ENCODE measurements at regions of chr3 and their contacts with region 1.

Region 1: DNA sequence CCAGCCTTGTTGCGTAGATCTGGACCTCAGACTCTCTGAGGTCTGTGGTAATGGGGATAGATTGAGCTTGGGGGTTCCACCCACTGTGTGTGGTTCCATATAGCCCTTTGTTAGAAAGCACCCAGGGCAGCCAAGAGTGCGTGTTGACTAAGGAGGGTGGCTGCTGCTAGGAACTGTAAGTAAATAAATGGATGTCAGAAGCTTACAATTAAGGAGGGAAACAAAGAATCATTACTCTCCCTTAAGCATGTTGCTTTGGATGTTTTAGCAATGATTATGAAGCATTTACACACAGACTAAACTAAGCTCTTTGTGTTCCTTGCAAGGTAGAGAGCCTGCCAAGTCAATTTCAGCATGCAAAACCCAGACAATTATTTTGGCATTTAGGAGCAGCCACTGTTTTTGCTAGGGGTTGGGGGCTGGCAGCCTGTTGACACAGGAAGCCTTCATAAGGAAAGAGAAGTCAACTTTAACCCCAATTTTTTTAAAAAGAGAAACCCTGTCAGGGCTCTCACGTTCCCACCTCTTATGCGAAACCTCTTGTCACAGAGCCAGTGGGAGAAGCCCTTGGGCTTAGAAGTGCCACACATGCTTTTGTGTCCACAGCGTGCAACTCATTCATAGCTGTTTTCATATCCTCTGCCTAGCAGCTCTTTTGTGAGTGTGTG is 127.8 kb downstream of the CMSS1 start:
- DNase-seq: no peak
- H3K4me3 ChIP-seq: no peak overlapping the region
- H3K27ac ChIP-seq: no peak overlapping the region
- H3K4me1 ChIP-seq: peaks cover 23% of the 10 kb centered on the region
- H3K27me3 ChIP-seq: no peaks in the 10 kb centered on the region
- CTCF ChIP-seq: no peak
- POLR2A ChIP-seq: no peak

Region 2: GRCh38 chr3:99286266-99286845 is 659.1 kb before region 1 on chr3:
- intact Hi-C with region 1: no loop called
- DNase-seq: no peak
- H3K4me3 ChIP-seq: no peak overlapping the region
- H3K27ac ChIP-seq: no peak overlapping the region
- H3K4me1 ChIP-seq: no peaks in the 10 kb centered on the region
- H3K27me3 ChIP-seq: no peaks in the 10 kb centered on the region
- CTCF ChIP-seq: no peak
- POLR2A ChIP-seq: no peak

Region 3: GRCh38 chr3:99859825-99860224 is 85.6 kb before region 1 on chr3:
- intact Hi-C with region 1: no loop called
- DNase-seq: no peak
- H3K4me3 ChIP-seq: no peak overlapping the region
- H3K27ac ChIP-seq: peak overlapping the region; percentile 4
- H3K4me1 ChIP-seq: peaks cover 27% of the 10 kb centered on the region
- H3K27me3 ChIP-seq: no peaks in the 10 kb centered on the region
- CTCF ChIP-seq: no peak
- POLR2A ChIP-seq: no peak

Region 4: DNA sequence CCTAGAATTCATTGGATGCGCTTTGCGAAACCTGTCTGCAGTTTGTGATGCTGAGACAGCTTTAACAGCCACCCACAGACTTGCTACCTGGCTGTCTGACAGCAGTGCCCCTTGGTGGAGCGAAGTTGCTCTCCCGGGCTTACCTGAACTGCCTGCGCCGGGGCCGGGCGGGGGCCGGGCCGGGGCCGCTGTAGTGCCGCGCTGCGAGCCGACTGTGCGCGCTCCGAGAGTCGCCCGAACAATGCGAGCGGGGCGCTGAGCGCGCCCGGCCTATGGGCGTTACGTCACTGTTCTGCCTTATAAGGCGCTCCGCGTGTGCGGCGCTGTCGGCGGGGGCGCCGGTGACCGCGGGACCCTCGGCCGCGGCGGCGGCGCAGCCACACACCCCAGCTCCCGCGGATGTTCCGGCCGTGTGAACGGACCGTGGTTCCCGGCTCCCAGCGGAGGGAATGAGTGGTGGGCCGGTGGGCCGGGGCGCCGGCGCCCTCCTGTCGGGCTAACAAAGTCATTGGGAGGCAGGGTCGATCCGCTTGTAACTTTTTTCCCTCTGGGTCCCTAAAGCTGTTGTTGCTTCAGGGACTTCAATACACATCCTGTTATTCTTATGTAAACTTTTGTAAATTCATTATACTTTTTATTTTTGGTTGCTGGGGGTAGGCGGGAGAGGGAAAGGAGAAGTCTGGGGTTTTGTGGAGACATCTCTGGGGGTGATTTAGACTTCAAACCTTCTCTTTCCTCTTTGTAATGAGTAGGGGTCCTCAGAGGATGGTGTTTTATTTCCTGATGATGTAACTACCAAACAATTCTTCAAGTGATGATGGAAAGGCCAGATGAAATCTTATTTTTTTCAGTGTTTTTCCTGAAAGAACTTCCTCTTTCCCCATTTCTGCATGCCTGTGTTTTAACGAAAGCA is 69.3 kb before region 1 on chr3:
- intact Hi-C with region 1: loop called (anchors 10 kb)
- DNase-seq: no peak
- H3K4me3 ChIP-seq: peak overlapping the region; percentile 71 to 83
- H3K27ac ChIP-seq: peak overlapping the region; percentile 94
- H3K4me1 ChIP-seq: peaks cover 26% of the 10 kb centered on the region
- H3K27me3 ChIP-seq: no peaks in the 10 kb centered on the region
- CTCF ChIP-seq: no peak
- POLR2A ChIP-seq: peak in 1 of 2 donors; percentile 84

Region 5: DNA sequence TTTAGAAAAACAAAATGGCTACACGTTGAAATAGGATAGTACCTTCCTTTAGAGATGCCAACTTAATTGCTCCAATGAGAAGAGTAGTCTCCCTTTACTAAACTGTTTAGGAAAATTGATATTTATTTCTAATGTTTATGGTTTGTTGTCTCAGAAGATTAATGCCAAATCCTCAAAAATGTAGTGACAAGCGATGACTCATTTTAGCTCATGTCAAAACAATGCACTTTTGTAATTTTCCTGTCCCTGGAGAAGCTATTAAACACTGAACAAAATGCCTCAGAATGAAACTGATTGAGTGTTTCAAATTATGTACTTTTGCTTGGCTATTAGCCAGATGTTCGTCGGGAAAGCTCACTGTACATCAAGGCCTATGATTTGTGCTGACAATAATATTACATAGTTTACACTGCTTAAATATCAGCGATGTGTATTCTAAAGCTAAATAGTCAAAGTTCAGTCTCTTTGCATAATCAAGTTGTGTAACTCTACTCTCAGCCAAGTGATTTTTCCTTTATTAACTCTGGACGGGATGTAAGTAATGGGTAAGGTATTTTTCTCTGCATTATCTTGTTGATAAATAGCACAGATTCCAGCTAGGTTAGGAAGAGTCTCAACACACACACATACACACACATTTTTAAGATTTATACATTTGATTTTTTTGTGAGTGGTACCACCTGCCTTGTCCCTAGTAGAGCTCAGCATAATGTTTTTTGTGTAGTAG is 44.1 kb before region 1 on chr3:
- intact Hi-C with region 1: no loop called
- DNase-seq: no peak
- H3K4me3 ChIP-seq: no peak overlapping the region
- H3K27ac ChIP-seq: peak overlapping the region; percentile 14
- H3K4me1 ChIP-seq: peaks cover 27% of the 10 kb centered on the region
- H3K27me3 ChIP-seq: no peaks in the 10 kb centered on the region
- CTCF ChIP-seq: no peak
- POLR2A ChIP-seq: no peak

Region 6: DNA sequence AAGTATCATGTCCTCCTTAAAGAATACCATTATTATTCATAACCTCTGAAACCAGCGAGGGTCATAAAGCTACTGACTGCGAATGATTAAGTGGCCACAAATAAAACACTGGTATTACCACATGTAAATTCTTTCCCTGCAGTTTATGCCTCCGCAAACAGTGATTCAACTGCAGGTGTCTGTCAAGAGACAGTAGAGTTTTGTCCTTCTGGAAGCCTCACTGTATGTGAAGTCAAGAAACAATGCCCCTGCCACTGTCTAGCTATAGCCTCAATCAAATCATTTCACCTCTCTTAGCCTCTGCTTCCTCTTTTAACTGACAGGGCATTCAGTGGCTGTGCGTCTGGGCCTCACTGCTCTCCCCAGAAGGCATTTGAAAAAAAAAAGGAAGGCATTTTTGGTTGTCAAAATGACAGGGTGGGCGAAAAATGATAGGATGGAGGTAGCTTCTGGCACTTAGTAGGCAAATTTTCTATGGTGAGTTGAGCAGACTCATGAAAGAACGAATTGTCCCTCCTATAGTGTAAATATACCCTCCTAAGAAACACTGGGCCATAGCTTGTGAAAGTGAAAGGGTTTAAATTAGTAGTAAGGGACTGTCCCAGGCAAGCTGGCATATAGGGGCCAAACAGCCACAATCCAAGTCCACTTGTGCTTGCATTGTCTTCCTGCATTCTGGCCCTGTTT is 102.1 kb after region 1 on chr3:
- intact Hi-C with region 1: loop called (anchors 10 kb)
- DNase-seq: no peak
- H3K4me3 ChIP-seq: peak overlapping the region in 1 of 2 donors; percentile 18
- H3K27ac ChIP-seq: peak overlapping the region; percentile 68
- H3K4me1 ChIP-seq: peaks cover 23% of the 10 kb centered on the region
- H3K27me3 ChIP-seq: no peaks in the 10 kb centered on the region
- CTCF ChIP-seq: no peak
- POLR2A ChIP-seq: no peak

Measured in vagina (tissue), 2 donors.